A549 (cell line): ENCODE measurements at regions of chr12 and their contacts with region 1.

Region 1: DNA sequence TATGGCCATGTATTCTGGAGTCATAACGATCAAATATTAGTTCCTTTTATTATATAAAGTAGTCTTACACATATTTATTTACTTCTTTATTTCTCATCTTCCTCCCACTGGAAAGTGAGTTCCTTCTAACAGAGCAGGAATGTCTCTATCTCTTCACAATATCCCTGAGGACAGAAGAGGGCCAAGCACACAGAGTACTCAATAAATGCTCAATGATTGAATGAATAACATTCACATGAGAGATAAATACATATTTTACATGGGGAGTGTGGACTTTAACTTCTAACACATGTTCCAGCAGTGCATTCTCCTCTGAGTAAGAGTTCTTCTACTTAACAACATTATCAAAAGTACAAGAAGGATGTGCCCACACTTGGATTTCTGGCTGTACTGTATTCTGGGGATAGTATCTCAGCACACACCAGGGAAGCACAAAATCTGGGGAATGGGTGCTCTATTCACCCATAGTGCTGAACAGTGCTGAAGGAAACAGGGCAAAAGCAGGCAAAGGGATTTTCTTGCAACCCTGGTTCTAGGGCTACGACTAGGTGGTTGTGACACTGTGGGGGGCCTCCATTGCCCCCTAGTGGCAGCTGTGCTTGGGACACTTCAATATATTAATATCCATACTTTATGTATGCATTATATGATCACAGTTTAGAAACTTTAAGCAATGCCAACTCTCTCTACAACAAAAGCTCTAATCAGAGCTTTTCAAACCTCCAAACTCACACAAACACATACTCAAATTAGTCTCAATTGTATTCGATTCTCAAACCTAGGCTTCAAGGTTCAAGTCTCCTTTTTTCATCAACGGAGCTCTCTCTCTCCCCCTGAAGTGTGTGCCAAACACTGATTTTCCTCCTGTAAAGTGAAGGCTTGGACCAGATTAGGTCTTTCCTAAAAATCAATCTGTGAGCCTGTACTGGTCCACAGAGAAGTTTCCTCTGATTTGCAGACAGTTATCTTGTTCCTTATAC is 115.5 kb downstream of the SLC2A13 start:
- DNase-seq: peak; percentile 15 to 53
- ATAC-seq: peak; percentile 95 to 98
- H3K4me3 ChIP-seq: no peak overlapping the region
- H3K27ac ChIP-seq: no peak overlapping the region
- H3K4me1 ChIP-seq: no peaks in the 10 kb centered on the region
- CTCF ChIP-seq: peak; percentile 82
- EP300 ChIP-seq: no peak
- POLR2A ChIP-seq: no peak
- RAD21 ChIP-seq: peak; percentile 69 to 78

Region 2: GRCh38 chr12:39329018-39329417 is 661.4 kb before region 1 on chr12:
- CTCF ChIA-PET with region 1: no interaction called
- POLR2A ChIA-PET with region 1: no interaction called
- DNase-seq: no peak
- ATAC-seq: no peak
- H3K4me3 ChIP-seq: no peak overlapping the region
- H3K27ac ChIP-seq: no peak overlapping the region
- H3K4me1 ChIP-seq: no peaks in the 10 kb centered on the region
- CTCF ChIP-seq: no peak
- EP300 ChIP-seq: no peak
- POLR2A ChIP-seq: no peak
- RAD21 ChIP-seq: no peak

Region 3: DNA sequence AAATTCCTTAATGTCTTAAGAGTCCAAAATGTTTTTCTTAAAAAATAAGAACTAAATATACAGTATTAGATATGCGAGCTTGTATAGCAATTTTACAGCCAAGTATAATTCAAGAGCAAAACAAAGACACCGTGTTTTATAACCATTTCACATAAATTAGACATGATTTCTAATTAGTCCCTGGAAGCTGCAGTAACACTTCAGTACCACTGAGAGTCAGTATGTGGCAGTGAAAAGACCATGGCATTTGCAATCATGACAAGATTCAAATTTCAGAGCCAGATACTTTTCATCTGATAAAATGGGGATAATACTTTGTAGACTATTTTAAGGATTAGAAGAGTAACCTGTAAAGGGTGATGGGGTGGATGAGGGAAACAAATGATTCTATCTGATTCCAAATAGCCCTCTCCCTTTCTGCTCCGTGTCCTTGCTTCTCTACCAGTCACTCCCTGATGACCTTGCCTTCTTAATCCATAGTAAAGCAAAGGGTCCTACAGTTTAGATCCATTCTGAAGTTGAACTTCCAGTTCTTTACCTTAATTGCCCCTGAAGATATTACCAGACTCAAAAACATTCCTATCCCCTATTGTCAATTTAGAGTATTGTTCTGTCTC is 225.4 kb before region 1 on chr12:
- CTCF ChIA-PET with region 1: interaction called, 11 read pairs
- POLR2A ChIA-PET with region 1: no interaction called
- DNase-seq: peak; percentile 28 to 55
- ATAC-seq: peak; percentile 47 to 79; a peak in 3 of 6 replicates
- H3K4me3 ChIP-seq: no peak overlapping the region
- H3K27ac ChIP-seq: no peak overlapping the region
- H3K4me1 ChIP-seq: no peaks in the 10 kb centered on the region
- CTCF ChIP-seq: peak; percentile 74
- EP300 ChIP-seq: no peak
- POLR2A ChIP-seq: no peak
- RAD21 ChIP-seq: peak; percentile 87 to 89

Region 4: DNA sequence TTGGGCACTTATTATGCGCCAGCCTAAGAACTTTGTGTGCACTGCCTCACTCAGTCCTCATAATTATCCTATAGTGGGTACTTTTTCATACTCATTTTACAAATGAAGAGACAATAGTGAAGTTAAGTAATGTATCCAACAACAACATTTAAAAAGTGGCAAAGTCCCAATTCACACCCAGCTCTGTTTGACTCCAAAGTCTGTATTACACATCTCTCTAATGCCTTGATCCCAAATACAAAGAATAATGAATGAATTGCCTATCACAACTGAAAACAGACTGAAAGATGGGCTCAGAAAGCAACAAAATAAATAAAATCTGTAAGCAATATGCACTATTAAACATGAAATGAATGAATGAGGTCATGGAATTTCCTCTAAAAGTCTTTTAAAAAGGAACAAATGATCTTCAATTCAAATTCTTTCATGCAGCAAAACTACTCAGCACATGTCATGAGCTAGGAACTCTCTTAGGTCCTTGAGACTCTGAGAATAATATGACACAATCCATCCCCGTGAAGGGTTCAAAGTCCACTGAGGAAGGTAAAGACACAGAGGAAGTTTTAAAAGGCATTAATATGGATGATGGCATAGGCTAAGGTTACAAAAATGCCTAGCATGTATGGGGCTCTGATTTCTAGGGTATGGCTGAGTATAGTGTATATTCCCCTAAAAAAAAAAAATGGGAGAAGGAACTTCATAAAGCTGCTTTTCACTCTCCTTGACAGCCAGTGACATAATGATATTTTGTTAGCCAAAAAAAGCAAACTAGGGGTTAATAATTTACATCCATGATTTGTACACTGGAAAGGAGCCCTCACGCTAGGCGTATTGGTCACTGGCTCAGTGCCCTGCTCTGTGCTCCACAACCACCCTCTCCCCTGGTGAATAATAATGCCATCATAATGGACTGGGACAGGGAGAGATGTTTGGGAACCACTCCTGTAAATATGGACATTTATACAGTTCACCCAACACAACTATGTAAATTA is 12.1 kb after region 1 on chr12:
- CTCF ChIA-PET with region 1: interaction called, 15 read pairs
- POLR2A ChIA-PET with region 1: no interaction called
- DNase-seq: peak; percentile 38 to 76
- ATAC-seq: peak; percentile 96
- H3K4me3 ChIP-seq: no peak overlapping the region; the same call in 2 of the 3 replicates
- H3K27ac ChIP-seq: peak overlapping the region; percentile 28 to 53; a peak in 5 of 6 replicates
- H3K4me1 ChIP-seq: peaks cover 36% of the 10 kb centered on the region
- CTCF ChIP-seq: no peak
- EP300 ChIP-seq: no peak; a peak in 1 of 5 replicates
- POLR2A ChIP-seq: no peak
- RAD21 ChIP-seq: peak in 1 of 2 experiments; percentile 22; a peak in 1 of 5 replicates